ENCODE measurements at regions of chr1 and their contacts with region 1.

Region 1: DNA sequence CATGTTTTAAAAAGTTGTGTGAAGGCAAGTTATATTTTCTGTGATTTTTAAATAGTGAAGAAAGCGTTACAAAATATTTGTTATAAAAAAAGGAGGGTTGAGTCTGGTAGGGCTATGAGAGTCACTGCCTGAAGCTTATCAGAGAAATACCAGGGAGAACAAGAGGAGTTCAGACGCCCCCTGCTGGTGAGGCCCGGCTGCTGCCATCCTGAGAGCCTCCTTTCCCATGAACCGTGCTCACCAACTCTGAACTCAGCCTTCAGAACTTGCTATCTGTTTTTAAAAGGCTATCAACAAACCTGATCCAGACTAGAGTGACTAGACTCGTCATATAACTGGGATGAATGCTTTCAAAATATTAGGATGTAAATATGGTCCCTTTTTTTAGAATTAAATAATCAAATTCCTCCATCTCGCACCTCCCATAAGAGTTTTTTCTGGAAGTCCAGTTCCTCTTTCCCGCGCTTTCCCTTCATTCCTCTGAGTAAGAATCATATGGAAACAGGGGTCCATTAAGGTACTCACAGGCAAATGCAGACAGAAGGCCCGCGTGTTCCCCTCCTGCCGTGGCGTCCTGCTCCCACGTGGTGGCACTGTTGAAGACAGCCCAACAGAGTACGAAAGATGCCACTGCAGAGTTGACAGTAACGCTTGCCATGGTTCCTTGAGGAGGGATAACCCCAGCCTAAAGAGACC is 26.2 kb upstream of the SPATA6 start:
- DNase-seq: peak; percentile 14
- H3K4me3 ChIP-seq: no peak overlapping the region
- CTCF ChIP-seq: peak; percentile 97

Region 2: GRCh38 chr1:48102766-48103165 is 395.5 kb before region 1 on chr1:
- CTCF ChIA-PET with region 1: no interaction called
- POLR2A ChIA-PET with region 1: no interaction called
- DNase-seq: no peak
- H3K4me3 ChIP-seq: no peak overlapping the region
- CTCF ChIP-seq: no peak

Region 3: GRCh38 chr1:48356901-48357300 is 141.3 kb before region 1 on chr1:
- CTCF ChIA-PET with region 1: interaction called, 18 read pairs
- POLR2A ChIA-PET with region 1: no interaction called
- DNase-seq: no peak
- H3K4me3 ChIP-seq: no peak overlapping the region
- CTCF ChIP-seq: no peak

Region 4: DNA sequence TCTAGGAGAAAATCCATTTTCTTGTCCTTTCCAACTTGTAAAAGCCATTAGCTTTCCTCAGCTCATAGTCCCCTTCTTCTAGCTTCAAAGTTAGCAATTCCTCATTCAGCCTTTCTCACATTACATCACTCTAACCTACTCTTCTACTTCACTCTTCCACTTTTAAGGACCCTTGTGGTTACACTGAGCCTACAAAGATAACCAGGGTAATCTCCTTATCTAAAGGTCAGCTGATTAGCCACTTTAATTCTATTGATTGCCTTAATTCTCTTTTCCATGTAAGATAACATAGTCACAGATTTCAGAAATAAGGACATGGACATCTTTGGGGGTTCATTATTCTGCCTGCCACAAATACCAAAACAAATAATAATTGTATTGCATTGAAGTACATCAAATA is 17.7 kb before region 1 on chr1:
- CTCF ChIA-PET with region 1: interaction called, 10 read pairs
- POLR2A ChIA-PET with region 1: no interaction called
- DNase-seq: no peak
- H3K4me3 ChIP-seq: no peak overlapping the region
- CTCF ChIP-seq: no peak

Measured in AG04449 (cell line).